ENCODE measurements at regions of chr7 and their contacts with region 1.

Region 1: DNA sequence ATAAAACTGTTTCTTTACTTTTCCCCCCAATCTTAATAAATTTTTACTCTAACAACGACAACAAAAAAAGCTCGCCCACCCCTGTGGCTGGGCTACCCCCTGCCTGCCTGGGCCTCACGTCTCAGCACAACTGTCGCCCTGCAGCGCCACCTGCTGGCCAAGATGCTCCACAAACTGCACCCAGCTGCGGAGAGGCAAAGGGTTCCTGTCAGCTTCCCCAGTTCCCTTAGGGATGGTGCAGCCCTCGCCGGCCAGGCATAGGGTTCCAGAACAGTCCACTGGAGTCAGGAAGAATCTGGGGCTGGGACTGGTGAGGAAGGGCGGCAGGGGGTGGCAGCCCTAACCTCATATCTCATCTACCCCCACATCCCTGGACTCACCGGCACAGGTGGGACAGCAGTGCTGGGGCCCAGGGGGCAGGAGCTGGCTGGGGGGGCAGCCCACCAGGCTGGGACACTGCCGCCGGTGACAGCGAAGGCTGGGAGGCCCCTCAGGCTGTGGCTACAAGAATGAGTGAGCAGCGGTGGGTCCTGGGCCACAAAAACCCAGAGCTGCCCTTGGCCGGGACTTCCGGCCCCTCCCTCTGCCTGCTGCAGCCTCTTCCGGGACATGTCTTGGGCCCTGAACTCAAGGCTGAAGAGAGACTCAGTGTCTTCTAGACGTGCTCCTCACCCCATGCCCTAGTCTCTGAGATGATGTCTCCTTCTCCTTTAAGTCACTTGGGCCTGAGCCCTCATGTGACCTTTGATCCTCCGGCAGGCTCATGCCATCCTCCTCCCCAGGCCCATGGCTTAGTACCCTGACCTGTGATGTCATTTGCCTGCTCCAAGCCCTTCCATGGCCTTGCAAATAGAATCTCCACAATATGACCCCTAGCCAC is 21.2 kb downstream of the ATP6V1F start:
- DNase-seq: peak; percentile 73 to 99
- H3K4me3 ChIP-seq: no peak overlapping the region
- H3K27ac ChIP-seq: no peak overlapping the region
- H3K4me1 ChIP-seq: peaks cover 0 to 14% (median 9%) of the 10 kb centered on the region in 4 experiments; a peak in 5 of 7 replicates
- H3K27me3 ChIP-seq: no peaks in the 10 kb centered on the region
- CTCF ChIP-seq: peak in 2 of 3 experiments; percentile 92 to 94; a peak in 3 of 4 replicates
- EP300 ChIP-seq: no peak
- POLR2A ChIP-seq: no peak
- RAD21 ChIP-seq: peak; percentile 86 to 89

Region 2: GRCh38 chr7:128783143-128783861 is 100.6 kb before region 1 on chr7:
- CTCF ChIA-PET with region 1: interaction called, 13 read pairs
- POLR2A ChIA-PET with region 1: interaction called, 3 read pairs
- DNase-seq: peak; percentile 91 to 99
- H3K4me3 ChIP-seq: peak overlapping the region; percentile 53 to 69 (median 60)
- H3K27ac ChIP-seq: no peak overlapping the region; the same call in 1 of the 2 replicates
- H3K4me1 ChIP-seq: peaks cover 0 to 3% (median 1%) of the 10 kb centered on the region in 4 experiments; a peak in 4 of 7 replicates
- H3K27me3 ChIP-seq: no peaks in the 10 kb centered on the region
- CTCF ChIP-seq: no peak
- EP300 ChIP-seq: no peak
- POLR2A ChIP-seq: no peak
- RAD21 ChIP-seq: no peak

Region 3: GRCh38 chr7:128830231-128831177 is 53.4 kb before region 1 on chr7 and contains the start of gene FLNC:
- CTCF ChIA-PET with region 1: interaction called, 54 read pairs
- POLR2A ChIA-PET with region 1: interaction called, 6 read pairs
- DNase-seq: peak in 1 of 2 experiments; percentile 72
- H3K4me3 ChIP-seq: peak within 1 kb of the TSS; percentile 45 to 66 (median 57)
- H3K27ac ChIP-seq: no peak within 1 kb of the TSS
- H3K4me1 ChIP-seq: peaks cover 3 to 53% (median 31%) of the 10 kb centered on the region in 4 experiments
- H3K27me3 ChIP-seq: peaks cover 8 to 27% (median 27%) of the 10 kb centered on the region in 4 experiments; a peak in 6 of 7 replicates
- CTCF ChIP-seq: no peak
- EP300 ChIP-seq: no peak
- POLR2A ChIP-seq: no peak
- RAD21 ChIP-seq: no peak
- total RNA-seq, gene FLNC: 10.7 and 12.0 TPM in 2 replicates

Region 4: GRCh38 chr7:128849804-128850490 is 33.9 kb before region 1 on chr7:
- CTCF ChIA-PET with region 1: interaction called, 80 read pairs
- POLR2A ChIA-PET with region 1: interaction called, 3 read pairs
- DNase-seq: no peak
- H3K4me3 ChIP-seq: no peak overlapping the region
- H3K27ac ChIP-seq: no peak overlapping the region
- H3K4me1 ChIP-seq: no peaks in the 10 kb centered on the region; a peak in 1 of 7 replicates
- H3K27me3 ChIP-seq: no peaks in the 10 kb centered on the region
- CTCF ChIP-seq: no peak
- EP300 ChIP-seq: no peak
- POLR2A ChIP-seq: no peak
- RAD21 ChIP-seq: no peak

Region 5: GRCh38 chr7:128869138-128869943 is 14.5 kb before region 1 on chr7:
- CTCF ChIA-PET with region 1: interaction called, 189 read pairs
- POLR2A ChIA-PET with region 1: interaction called, 22 read pairs
- DNase-seq: peak in 1 of 2 experiments; percentile 81
- H3K4me3 ChIP-seq: peak overlapping the region; percentile 49 to 73 (median 57)
- H3K27ac ChIP-seq: no peak overlapping the region
- H3K4me1 ChIP-seq: peaks cover 0 to 18% (median 12%) of the 10 kb centered on the region in 4 experiments; a peak in 6 of 7 replicates
- H3K27me3 ChIP-seq: peaks cover 5 to 42% (median 36%) of the 10 kb centered on the region in 4 experiments
- CTCF ChIP-seq: no peak
- EP300 ChIP-seq: no peak
- POLR2A ChIP-seq: no peak
- RAD21 ChIP-seq: no peak

Region 6: GRCh38 chr7:129053938-129054437 is 170.1 kb after region 1 on chr7:
- CTCF ChIA-PET with region 1: no interaction called
- POLR2A ChIA-PET with region 1: no interaction called
- DNase-seq: no peak
- H3K4me3 ChIP-seq: peak overlapping the region; percentile 83 to 99 (median 92)
- H3K27ac ChIP-seq: peak overlapping the region; percentile 96; the same call in 1 of the 2 replicates
- H3K4me1 ChIP-seq: no peaks in the 10 kb centered on the region; a peak in 1 of 7 replicates
- H3K27me3 ChIP-seq: no peaks in the 10 kb centered on the region
- CTCF ChIP-seq: no peak
- EP300 ChIP-seq: no peak
- POLR2A ChIP-seq: no peak
- RAD21 ChIP-seq: no peak